Head of caudate nucleus (tissue), 42 donors: ENCODE measurements at regions of chr1 and their contacts with region 1.

Region 1: GRCh38 chr1:3410142-3410925 is 44.1 kb upstream of the ARHGEF16 start:
- DNase-seq: peak; percentile 60 to 90 (median 81)

Region 2: GRCh38 chr1:2821966-2822620 is 588.2 kb before region 1 on chr1:
- intact Hi-C with region 1: loop called (anchors 10 kb)
- DNase-seq: peak in 41 of 42 donors; percentile 8 to 78 (median 55)

Region 3: DNA sequence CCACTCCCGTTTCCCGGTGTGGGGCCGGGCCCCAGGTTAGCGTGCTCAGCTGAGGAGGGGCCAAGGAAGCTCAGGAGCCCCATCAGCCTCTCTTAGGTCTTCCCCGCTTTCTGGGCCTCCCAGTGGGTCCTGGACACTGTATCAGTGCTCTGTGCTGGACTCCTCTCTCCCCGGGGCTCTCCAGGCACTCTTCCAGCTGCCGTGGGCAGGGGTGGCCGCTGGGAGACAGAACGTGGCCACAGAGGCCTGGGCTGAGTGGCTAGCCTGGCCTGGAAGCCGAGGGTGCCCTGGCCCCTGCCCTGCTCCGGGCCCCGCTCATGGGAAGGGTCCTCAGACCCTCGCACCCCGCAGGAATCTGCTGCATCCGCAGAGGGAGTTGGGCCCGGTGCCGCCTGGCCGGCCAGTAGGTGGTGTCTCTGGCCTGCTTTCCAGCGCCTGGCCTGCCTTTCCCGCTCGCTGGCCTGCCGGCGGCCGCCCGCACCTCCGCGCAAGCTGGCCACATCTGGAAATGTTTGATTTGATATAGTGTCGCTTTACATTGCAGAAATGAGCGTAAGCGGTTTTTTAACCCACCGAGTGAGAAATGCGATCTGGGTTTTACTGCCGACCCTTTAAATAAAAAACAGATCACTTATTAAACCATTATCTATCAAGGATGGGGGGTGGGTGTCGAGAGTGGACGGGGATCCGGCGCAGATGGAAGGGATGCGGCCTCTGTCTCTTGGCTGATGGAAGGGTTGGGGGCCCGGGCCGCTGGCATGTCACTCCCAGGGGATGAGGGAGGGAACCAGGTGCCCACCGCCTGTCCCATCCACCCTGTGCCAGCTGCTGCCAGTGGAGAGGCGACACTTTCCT is 534.4 kb before region 1 on chr1:
- intact Hi-C with region 1: loop called (anchors 10 kb)
- DNase-seq: peak; percentile 21 to 86 (median 61)

Region 4: DNA sequence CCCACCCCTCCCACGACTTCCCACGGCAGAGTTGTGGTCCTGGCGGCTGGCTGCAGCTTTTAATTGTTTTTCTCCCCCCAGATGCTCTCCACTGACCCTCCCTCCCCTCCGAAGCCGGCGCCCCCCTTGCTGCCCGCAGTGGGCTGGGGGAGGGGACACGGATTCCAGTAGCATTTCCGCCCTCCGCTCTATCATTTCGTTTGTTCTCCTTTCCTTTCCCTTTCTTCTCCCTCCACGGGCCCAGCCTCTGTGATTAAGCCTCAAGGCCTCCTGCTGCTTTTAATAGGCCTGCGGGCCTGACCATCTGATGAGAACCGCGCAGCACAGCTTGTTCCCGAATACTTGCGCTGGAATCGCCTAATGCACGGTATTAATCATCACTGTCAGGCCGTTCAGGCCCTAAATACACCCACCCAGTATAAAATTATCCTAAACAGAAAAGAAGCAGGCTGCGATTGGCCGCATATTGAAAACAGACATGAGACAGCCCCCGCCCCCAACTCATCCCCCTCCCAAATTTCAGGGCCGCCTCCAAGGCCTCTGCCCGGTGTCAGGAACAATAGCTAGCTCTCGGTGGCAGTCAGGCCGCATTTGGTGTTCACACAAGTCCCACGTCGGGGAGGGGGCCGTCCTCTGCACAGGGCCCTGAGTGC is 57.9 kb before region 1 on chr1:
- intact Hi-C with region 1: no loop called
- DNase-seq: peak in 1 of 42 donors; percentile 70